Heart left ventricle (tissue), 16 donors: ENCODE measurements at regions of chr2 and their contacts with region 1.

Region 1: GRCh38 chr2:83386549-83386948 is 1072.5 kb downstream of the SUCLG1 start:
- DNase-seq: no peak
- ATAC-seq: no peak
- H3K4me3 ChIP-seq: no peak overlapping the region
- H3K27ac ChIP-seq: no peak overlapping the region
- H3K4me1 ChIP-seq: no peaks in the 10 kb centered on the region
- H3K27me3 ChIP-seq: no peaks in the 10 kb centered on the region
- CTCF ChIP-seq: no peak
- POLR2A ChIP-seq: no peak

Region 2: GRCh38 chr2:83282841-83283240 is 103.7 kb before region 1 on chr2:
- intact Hi-C with region 1: no loop called
- DNase-seq: no peak
- ATAC-seq: no peak
- H3K4me3 ChIP-seq: no peak overlapping the region
- H3K27ac ChIP-seq: no peak overlapping the region
- H3K4me1 ChIP-seq: no peaks in the 10 kb centered on the region
- H3K27me3 ChIP-seq: no peaks in the 10 kb centered on the region
- CTCF ChIP-seq: no peak
- POLR2A ChIP-seq: no peak

Region 3: GRCh38 chr2:83342860-83343329 is 43.7 kb before region 1 on chr2:
- intact Hi-C with region 1: no loop called
- DNase-seq: no peak
- ATAC-seq: no peak
- H3K4me3 ChIP-seq: no peak overlapping the region
- H3K27ac ChIP-seq: no peak overlapping the region
- H3K4me1 ChIP-seq: no peaks in the 10 kb centered on the region
- H3K27me3 ChIP-seq: no peaks in the 10 kb centered on the region
- CTCF ChIP-seq: no peak
- POLR2A ChIP-seq: no peak

Region 4: GRCh38 chr2:83364264-83364663 is 22.3 kb before region 1 on chr2:
- intact Hi-C with region 1: loop called in 1 of 10 experiments (anchors 2 kb)
- DNase-seq: no peak
- ATAC-seq: no peak
- H3K4me3 ChIP-seq: no peak overlapping the region
- H3K27ac ChIP-seq: no peak overlapping the region
- H3K4me1 ChIP-seq: no peaks in the 10 kb centered on the region
- H3K27me3 ChIP-seq: no peaks in the 10 kb centered on the region
- CTCF ChIP-seq: no peak
- POLR2A ChIP-seq: no peak